WTC11 (cell line): ENCODE measurements at regions of chr1 and their contacts with region 1.

Region 1: GRCh38 chr1:201042779-201043461 is 19.4 kb upstream of the KIF21B start:
- DNase-seq: peak; percentile 70
- ATAC-seq: peak; percentile 87
- H3K4me3 Mint-ChIP-seq: no peak overlapping the region
- H3K27ac Mint-ChIP-seq: no peak overlapping the region
- H3K4me1 Mint-ChIP-seq: no peaks in the 10 kb centered on the region
- H3K27me3 Mint-ChIP-seq: no peaks in the 10 kb centered on the region; the same call in 1 of the 2 replicates
- CTCF ChIP-seq: peak; percentile 83

Region 2: GRCh38 chr1:201016211-201016651 is 26.7 kb before region 1 on chr1:
- CTCF ChIA-PET with region 1: interaction called, 143 read pairs
- POLR2A ChIA-PET with region 1: interaction called, 5 read pairs
- DNase-seq: no peak
- ATAC-seq: no peak
- H3K4me3 Mint-ChIP-seq: no peak overlapping the region
- H3K27ac Mint-ChIP-seq: no peak overlapping the region
- H3K4me1 Mint-ChIP-seq: peaks cover 51% of the 10 kb centered on the region
- H3K27me3 Mint-ChIP-seq: no peaks in the 10 kb centered on the region
- CTCF ChIP-seq: no peak

Region 3: DNA sequence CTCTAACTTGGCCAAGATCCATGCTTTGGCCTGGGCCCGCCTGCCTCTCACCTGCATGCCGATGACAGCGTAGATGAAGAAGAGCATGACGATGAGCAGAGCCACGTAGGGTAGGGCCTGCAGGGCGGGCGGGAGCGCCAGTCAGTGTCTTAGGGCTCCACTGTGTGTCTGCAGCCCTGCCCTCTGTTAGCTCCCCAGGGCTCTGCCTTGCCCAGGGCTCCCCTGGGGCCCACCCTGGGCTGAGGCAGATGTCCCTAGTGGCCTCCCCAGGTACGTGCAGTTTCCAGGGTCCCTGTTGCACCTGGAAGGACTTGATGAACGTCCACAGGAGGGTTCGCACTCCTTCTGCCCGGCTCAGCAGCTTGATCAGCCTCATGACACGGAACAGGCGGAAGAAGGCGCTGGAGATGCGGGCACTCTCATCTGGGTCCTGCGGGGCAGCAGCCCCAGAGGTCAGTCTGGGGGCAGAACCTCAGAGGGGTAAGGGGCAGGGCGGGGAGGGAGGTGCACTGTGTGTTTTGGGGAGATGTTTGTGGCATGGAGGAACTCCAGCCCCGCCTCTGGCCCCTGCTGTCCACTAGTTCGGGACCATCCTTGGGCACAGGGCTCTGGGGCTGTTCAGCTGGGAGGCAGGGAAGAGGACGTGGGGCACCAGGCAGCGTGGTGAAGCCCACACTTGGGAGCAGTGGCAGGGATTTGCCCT is 10.4 kb after region 1 on chr1:
- CTCF ChIA-PET with region 1: interaction called, 10 read pairs
- POLR2A ChIA-PET with region 1: no interaction called
- DNase-seq: peak; percentile 45
- ATAC-seq: peak; percentile 75
- H3K4me3 Mint-ChIP-seq: no peak overlapping the region
- H3K27ac Mint-ChIP-seq: no peak overlapping the region
- H3K4me1 Mint-ChIP-seq: peaks cover 9% of the 10 kb centered on the region
- H3K27me3 Mint-ChIP-seq: no peaks in the 10 kb centered on the region
- CTCF ChIP-seq: no peak